ENCODE measurements at regions of chr20 and their contacts with region 1.

Region 1: DNA sequence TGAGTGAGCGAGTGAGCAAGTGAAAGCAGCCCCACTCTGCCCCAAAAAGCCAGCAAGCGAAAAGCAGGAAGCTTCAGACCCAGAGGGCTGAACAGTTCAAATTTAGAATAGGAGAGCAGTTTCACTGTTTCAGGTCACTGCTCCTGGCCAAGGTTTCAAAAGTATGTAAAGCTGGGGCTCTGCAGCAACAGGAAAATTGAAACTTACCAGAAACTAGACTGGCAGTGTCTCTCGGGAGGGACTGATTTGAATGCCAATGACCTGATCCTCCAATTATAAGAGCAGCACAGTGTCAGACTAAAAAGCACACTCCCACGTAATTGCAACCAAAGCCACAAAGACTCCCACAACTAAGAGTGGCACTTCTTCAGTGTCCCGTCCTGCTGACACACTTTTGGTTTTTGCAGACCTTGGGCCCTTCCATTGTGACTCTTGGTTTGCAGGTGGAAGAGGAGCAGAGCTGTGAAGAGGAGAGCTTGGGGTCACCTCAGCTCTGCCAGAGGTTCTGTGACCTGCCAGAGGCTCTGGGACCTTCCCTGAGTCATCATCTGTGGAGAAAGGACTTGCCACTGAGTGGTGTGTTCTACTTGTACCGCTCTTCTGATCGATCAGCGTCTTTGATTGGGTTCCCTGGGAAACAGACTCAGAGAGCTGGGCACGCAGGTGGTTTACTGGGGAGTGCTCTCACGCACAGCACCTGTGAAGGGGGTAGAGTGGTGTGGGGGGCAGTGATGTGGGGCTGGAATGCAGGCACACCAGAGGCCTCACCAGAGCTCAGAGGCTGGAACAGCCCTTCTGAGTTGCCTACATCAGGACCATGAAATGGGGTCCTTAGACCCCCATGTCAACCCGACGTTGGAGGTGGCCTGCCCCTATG is 52.7 kb upstream of the PTGIS start:
- DNase-seq: peak in 1 of 5 donors; percentile 7
- H3K4me3 ChIP-seq: no peak overlapping the region
- H3K27ac ChIP-seq: no peak overlapping the region
- H3K4me1 ChIP-seq: no peaks in the 10 kb centered on the region
- H3K27me3 ChIP-seq: no peaks in the 10 kb centered on the region
- CTCF ChIP-seq: no peak
- EP300 ChIP-seq: no peak
- POLR2A ChIP-seq: no peak

Region 2: GRCh38 chr20:49713753-49714712 is 93.4 kb after region 1 on chr20 and contains the start of gene B4GALT5:
- intact Hi-C with region 1: loop called in 1 of 4 experiments (anchors 10 kb)
- DNase-seq: peak; percentile 76 to 85 (median 84)
- H3K4me3 ChIP-seq: peak within 1 kb of the TSS; percentile 74
- H3K27ac ChIP-seq: peak within 1 kb of the TSS; percentile 80 to 81
- H3K4me1 ChIP-seq: peaks cover 1% of the 10 kb centered on the region
- H3K27me3 ChIP-seq: no peaks in the 10 kb centered on the region
- CTCF ChIP-seq: no peak
- EP300 ChIP-seq: no peak
- POLR2A ChIP-seq: no peak
- total RNA-seq, gene B4GALT5: 19.0 to 53.6 (median 37.7) TPM

Measured in ovary (tissue), 10 donors.